ENCODE measurements at regions of chr1 and their contacts with region 1.

Region 1: DNA sequence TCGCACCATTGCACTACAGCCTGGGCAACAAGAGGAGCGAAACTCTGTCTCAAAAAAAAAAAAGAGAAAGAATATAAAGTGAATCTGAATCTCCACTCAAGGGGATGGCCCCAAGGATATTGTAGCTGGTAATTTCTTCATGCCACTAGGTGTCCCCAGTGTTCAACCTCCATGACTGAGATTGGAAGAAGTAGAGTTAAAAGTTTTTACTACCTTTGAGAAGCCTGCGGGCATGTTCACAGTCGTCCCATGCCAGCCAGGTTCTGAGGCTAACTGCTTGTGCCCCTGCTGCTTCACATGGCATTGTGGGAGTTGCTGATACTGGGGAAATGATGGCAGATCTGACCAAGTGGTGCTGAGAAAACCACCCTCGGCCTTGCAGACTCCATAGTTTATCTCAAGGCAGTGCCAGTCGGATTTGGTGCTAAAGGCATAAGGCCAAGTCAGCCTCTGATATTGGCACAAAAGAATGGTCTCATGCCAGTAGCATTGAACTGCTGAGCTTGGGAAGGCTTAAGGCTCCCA is 10.8 kb upstream of the SHISA4 start:
- DNase-seq: peak; percentile 85
- H3K4me3 Mint-ChIP-seq: no peak overlapping the region
- H3K27ac Mint-ChIP-seq: no peak overlapping the region
- H3K4me1 Mint-ChIP-seq: peaks cover 21% of the 10 kb centered on the region
- H3K27me3 Mint-ChIP-seq: no peaks in the 10 kb centered on the region
- CTCF ChIP-seq: peak; percentile 93

Region 2: GRCh38 chr1:201614262-201615015 is 263.5 kb before region 1 on chr1:
- CTCF ChIA-PET with region 1: no interaction called
- POLR2A ChIA-PET with region 1: no interaction called
- intact Hi-C with region 1: no loop called
- DNase-seq: no peak
- H3K4me3 Mint-ChIP-seq: no peak overlapping the region
- H3K27ac Mint-ChIP-seq: no peak overlapping the region
- H3K4me1 Mint-ChIP-seq: peaks cover 9% of the 10 kb centered on the region
- H3K27me3 Mint-ChIP-seq: no peaks in the 10 kb centered on the region
- CTCF ChIP-seq: no peak

Region 3: DNA sequence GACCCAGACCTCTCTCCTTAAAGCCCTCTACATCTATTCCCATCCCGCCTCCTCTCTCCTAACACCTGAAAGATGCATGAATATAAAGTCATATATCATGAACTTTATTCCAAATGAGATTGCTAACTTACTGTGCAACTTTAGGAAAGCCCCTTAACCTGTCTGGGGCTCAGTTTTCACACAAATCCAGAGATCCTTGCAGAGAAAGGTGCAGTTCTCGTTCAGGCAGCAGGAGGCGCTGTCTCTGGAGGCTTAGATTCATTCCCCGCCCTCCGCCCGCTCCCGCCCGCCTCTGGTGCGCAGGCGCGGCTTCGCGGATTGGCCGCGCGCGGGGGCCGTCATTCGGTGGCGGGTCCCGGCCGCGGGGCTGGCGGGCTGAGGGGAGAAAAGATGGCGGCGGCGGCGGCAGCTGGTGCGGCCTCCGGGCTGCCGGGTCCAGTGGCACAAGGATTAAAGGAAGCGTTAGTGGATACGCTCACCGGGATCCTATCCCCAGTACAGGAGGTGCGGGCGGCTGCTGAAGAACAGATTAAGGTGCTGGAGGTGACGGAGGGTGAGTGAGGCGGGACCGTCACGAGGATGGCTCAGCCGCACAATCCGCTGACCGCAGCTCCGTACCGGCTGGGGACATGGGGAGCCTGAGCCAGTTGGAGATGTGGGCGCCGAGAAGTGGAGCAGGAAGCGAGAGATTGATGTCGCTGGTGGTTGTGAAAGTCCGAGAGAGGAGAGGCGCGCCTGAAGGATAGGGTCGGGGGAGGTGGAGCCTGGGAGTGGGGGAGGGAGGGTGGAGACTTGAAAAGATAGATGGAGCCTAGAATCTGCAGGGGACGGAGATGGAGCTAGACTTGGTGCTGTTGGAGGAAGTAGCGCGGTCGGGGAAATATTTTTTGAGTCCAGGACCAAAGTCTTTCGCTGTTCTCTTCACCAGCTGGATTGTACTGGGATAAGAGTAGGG is 48.8 kb before region 1 on chr1 and contains the start of gene IPO9:
- CTCF ChIA-PET with region 1: interaction called, 10 read pairs
- POLR2A ChIA-PET with region 1: interaction called, 22 read pairs
- intact Hi-C with region 1: loop called (anchors 1 kb)
- DNase-seq: peak; percentile 98
- H3K4me3 Mint-ChIP-seq: peak within 1 kb of the TSS; percentile 100
- H3K27ac Mint-ChIP-seq: peak within 1 kb of the TSS; percentile 94
- H3K4me1 Mint-ChIP-seq: peaks cover 46% of the 10 kb centered on the region
- H3K27me3 Mint-ChIP-seq: no peaks in the 10 kb centered on the region
- CTCF ChIP-seq: peak; percentile 100
- total RNA-seq, gene IPO9: 112 and 117 TPM in 2 replicates

Region 4: GRCh38 chr1:201859424-201859823 is 18.5 kb before region 1 on chr1:
- CTCF ChIA-PET with region 1: interaction called, 13 read pairs
- POLR2A ChIA-PET with region 1: interaction called, 3 read pairs
- intact Hi-C with region 1: no loop called
- DNase-seq: peak; percentile 63
- H3K4me3 Mint-ChIP-seq: no peak overlapping the region
- H3K27ac Mint-ChIP-seq: no peak overlapping the region
- H3K4me1 Mint-ChIP-seq: peaks cover 12% of the 10 kb centered on the region
- H3K27me3 Mint-ChIP-seq: no peaks in the 10 kb centered on the region
- CTCF ChIP-seq: no peak

Region 5: GRCh38 chr1:201955009-201955728 is 77.2 kb after region 1 on chr1 and contains the start of gene TIMM17A:
- CTCF ChIA-PET with region 1: interaction called, 8 read pairs
- POLR2A ChIA-PET with region 1: interaction called, 69 read pairs
- intact Hi-C with region 1: no loop called
- DNase-seq: peak; percentile 100
- H3K4me3 Mint-ChIP-seq: peak within 1 kb of the TSS; percentile 96
- H3K27ac Mint-ChIP-seq: peak within 1 kb of the TSS; percentile 99
- H3K4me1 Mint-ChIP-seq: peaks cover 12% of the 10 kb centered on the region
- H3K27me3 Mint-ChIP-seq: no peaks in the 10 kb centered on the region
- CTCF ChIP-seq: no peak
- total RNA-seq, gene TIMM17A: 157 and 171 TPM in 2 replicates

Region 6: DNA sequence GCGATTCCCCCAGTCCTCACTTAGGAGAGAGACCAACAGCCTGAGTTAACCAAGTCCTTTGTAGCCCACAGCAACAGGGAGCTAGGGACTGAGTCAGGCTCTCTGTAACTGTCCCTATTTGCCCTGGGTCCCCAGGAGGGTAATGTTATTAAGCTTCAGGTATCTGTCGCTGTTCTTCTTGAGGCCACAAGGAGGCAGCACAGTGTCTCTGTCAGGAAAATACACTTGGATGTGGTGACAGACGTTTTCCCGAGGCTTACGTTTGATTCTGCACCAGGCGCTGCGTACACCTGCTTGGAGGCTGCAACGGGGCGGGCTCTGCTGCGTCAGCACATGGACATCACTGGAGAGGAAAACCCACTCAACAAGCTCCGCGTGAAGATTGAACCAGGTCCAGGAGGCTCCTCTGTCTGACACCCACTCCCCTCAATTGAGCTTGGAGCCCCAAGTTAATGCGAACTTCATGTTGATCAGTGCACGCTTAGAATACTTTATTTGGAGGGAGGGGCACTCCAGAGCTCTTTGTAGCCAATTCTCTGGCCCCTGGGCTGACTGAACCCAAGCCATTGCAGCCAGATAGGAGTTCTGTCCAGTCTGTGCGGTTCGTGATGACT is 121.8 kb after region 1 on chr1:
- CTCF ChIA-PET with region 1: interaction called, 15 read pairs
- POLR2A ChIA-PET with region 1: interaction called, 5 read pairs
- intact Hi-C with region 1: no loop called
- DNase-seq: peak; percentile 81
- H3K4me3 Mint-ChIP-seq: no peak overlapping the region
- H3K27ac Mint-ChIP-seq: no peak overlapping the region
- H3K4me1 Mint-ChIP-seq: no peaks in the 10 kb centered on the region
- H3K27me3 Mint-ChIP-seq: no peaks in the 10 kb centered on the region
- CTCF ChIP-seq: peak; percentile 78

Region 7: GRCh38 chr1:202122639-202123335 is 244.8 kb after region 1 on chr1 and contains the start of gene GPR37L1:
- CTCF ChIA-PET with region 1: interaction called, 15 read pairs
- POLR2A ChIA-PET with region 1: no interaction called
- intact Hi-C with region 1: loop called (anchors 5 kb)
- DNase-seq: peak; percentile 30
- H3K4me3 Mint-ChIP-seq: no peak within 1 kb of the TSS
- H3K27ac Mint-ChIP-seq: no peak within 1 kb of the TSS
- H3K4me1 Mint-ChIP-seq: no peaks in the 10 kb centered on the region
- H3K27me3 Mint-ChIP-seq: peaks cover 17% of the 10 kb centered on the region
- CTCF ChIP-seq: peak; percentile 30
- total RNA-seq, gene GPR37L1: not detected in 2 replicates

Region 8: GRCh38 chr1:202315576-202316168 is 437.7 kb after region 1 on chr1:
- CTCF ChIA-PET with region 1: no interaction called
- POLR2A ChIA-PET with region 1: no interaction called
- intact Hi-C with region 1: no loop called
- DNase-seq: peak; percentile 92
- H3K4me3 Mint-ChIP-seq: no peak overlapping the region
- H3K27ac Mint-ChIP-seq: no peak overlapping the region
- H3K4me1 Mint-ChIP-seq: no peaks in the 10 kb centered on the region
- H3K27me3 Mint-ChIP-seq: no peaks in the 10 kb centered on the region
- CTCF ChIP-seq: peak; percentile 99

Measured in MCF 10A (cell line).